GM10248 (cell line): ENCODE measurements at regions of chr2 and their contacts with region 1.

Region 1: GRCh38 chr2:197777823-197778407 is 7.2 kb downstream of the BOLL start:
- DNase-seq: no peak
- CTCF ChIP-seq: peak; percentile 62

Region 2: GRCh38 chr2:197425550-197425949 is 352.4 kb before region 1 on chr2:
- CTCF ChIA-PET with region 1: no interaction called
- POLR2A ChIA-PET with region 1: no interaction called
- DNase-seq: no peak
- CTCF ChIP-seq: no peak

Region 3: GRCh38 chr2:197705121-197705911 is 72.6 kb before region 1 on chr2 and contains the start of gene MARS2:
- CTCF ChIA-PET with region 1: interaction called, 37 read pairs
- POLR2A ChIA-PET with region 1: no interaction called
- DNase-seq: peak; percentile 97
- CTCF ChIP-seq: no peak

Region 4: GRCh38 chr2:197710424-197711042 is 67.4 kb before region 1 on chr2:
- CTCF ChIA-PET with region 1: interaction called, 37 read pairs
- POLR2A ChIA-PET with region 1: no interaction called
- DNase-seq: peak; percentile 66
- CTCF ChIP-seq: no peak